ENCODE measurements at regions of chr11 and their contacts with region 1.

Region 1: GRCh38 chr11:124970925-124971324 is 16.9 kb downstream of the CCDC15 start:
- DNase-seq: peak; percentile 46
- H3K4me3 ChIP-seq: no peak overlapping the region
- H3K27ac ChIP-seq: no peak overlapping the region
- H3K4me1 ChIP-seq: no peaks in the 10 kb centered on the region
- H3K27me3 ChIP-seq: no peaks in the 10 kb centered on the region
- CTCF ChIP-seq: peak; percentile 10 to 49

Region 2: GRCh38 chr11:124359566-124359965 is 611.4 kb before region 1 on chr11:
- CTCF ChIA-PET with region 1: no interaction called
- dilution Hi-C with region 1: no loop called
- in situ Hi-C with region 1: no loop called
- intact Hi-C with region 1: no loop called
- DNase-seq: no peak
- H3K4me3 ChIP-seq: no peak overlapping the region
- H3K27ac ChIP-seq: no peak overlapping the region
- H3K4me1 ChIP-seq: no peaks in the 10 kb centered on the region
- H3K27me3 ChIP-seq: peaks cover 4% of the 10 kb centered on the region
- CTCF ChIP-seq: no peak

Region 3: GRCh38 chr11:125053167-125053566 is 82.2 kb after region 1 on chr11:
- CTCF ChIA-PET with region 1: no interaction called
- dilution Hi-C with region 1: no loop called
- in situ Hi-C with region 1: no loop called
- intact Hi-C with region 1: no loop called
- DNase-seq: peak; percentile 35
- H3K4me3 ChIP-seq: no peak overlapping the region
- H3K27ac ChIP-seq: no peak overlapping the region
- H3K4me1 ChIP-seq: peaks cover 5% of the 10 kb centered on the region
- H3K27me3 ChIP-seq: no peaks in the 10 kb centered on the region
- CTCF ChIP-seq: no peak

Region 4: GRCh38 chr11:125091247-125091876 is 120.4 kb after region 1 on chr11:
- CTCF ChIA-PET with region 1: no interaction called
- dilution Hi-C with region 1: no loop called
- in situ Hi-C with region 1: no loop called
- intact Hi-C with region 1: loop called (anchors 5 kb)
- DNase-seq: peak; percentile 57
- H3K4me3 ChIP-seq: no peak overlapping the region
- H3K27ac ChIP-seq: no peak overlapping the region
- H3K4me1 ChIP-seq: peaks cover 14% of the 10 kb centered on the region
- H3K27me3 ChIP-seq: no peaks in the 10 kb centered on the region
- CTCF ChIP-seq: peak; percentile 46 to 53

Region 5: GRCh38 chr11:126034039-126034932 is 1063.4 kb after region 1 on chr11:
- CTCF ChIA-PET with region 1: no interaction called
- dilution Hi-C with region 1: no loop called
- in situ Hi-C with region 1: no loop called
- intact Hi-C with region 1: no loop called
- DNase-seq: no peak
- H3K4me3 ChIP-seq: no peak overlapping the region
- H3K27ac ChIP-seq: no peak overlapping the region
- H3K4me1 ChIP-seq: no peaks in the 10 kb centered on the region
- H3K27me3 ChIP-seq: peaks cover 6% of the 10 kb centered on the region
- CTCF ChIP-seq: no peak

Measured in mammary epithelial cell (primary cell).